ENCODE measurements at regions of chr10 and their contacts with region 1.

Region 1: GRCh38 chr10:123994417-123995081 is 98.8 kb downstream of the CHST15 start:
- DNase-seq: peak; percentile 76
- H3K4me3 ChIP-seq: no peak overlapping the region
- H3K27ac ChIP-seq: no peak overlapping the region
- H3K4me1 ChIP-seq: no peaks in the 10 kb centered on the region
- H3K27me3 ChIP-seq: peaks cover 19 to 24% of the 10 kb centered on the region in 2 experiments
- CTCF ChIP-seq: peak; percentile 92 to 96
- POLR2A ChIP-seq: no peak

Region 2: DNA sequence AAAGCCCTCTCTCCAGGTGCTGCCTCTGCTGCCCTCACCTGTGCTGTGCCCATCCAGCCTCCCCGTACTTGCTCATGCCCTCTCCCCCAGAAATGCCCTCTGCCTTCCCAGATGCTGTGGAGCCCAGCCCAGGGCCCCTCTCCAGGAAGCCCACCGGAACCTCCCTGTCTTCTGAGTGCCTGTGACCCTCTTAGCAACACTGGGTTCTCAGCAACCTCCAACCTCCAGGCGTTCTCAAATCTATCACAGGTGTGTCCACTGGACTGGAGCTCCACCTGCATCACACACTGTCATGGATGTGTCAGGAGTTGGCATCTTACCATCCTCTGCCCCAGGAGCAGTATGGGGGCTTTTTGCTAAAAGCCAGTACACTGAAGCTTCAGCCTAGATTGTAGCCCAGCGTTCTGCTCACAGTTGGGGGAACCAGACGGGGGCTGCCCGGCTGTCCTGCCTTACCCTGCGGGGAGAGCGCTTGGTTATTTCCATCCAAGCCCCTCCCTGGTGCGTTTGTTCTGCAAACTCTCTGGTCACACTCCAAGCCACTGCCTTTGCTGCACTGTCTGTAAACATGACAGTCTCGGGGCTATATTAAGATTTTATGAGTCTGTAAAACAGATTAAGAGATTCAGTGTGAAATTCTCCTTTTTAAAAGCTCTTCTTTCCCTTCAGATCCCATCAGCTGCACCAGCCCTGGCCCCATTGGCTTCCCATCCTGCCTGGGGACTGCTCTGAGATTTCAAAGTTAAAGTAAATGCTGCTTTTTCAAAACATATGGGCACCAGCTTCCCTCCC is 31.6 kb before region 1 on chr10:
- CTCF ChIA-PET with region 1: no interaction called
- POLR2A ChIA-PET with region 1: no interaction called
- dilution Hi-C with region 1: no loop called
- intact Hi-C with region 1: no loop called
- DNase-seq: no peak
- H3K4me3 ChIP-seq: no peak overlapping the region
- H3K27ac ChIP-seq: no peak overlapping the region
- H3K4me1 ChIP-seq: no peaks in the 10 kb centered on the region
- H3K27me3 ChIP-seq: no peaks in the 10 kb centered on the region
- CTCF ChIP-seq: no peak
- POLR2A ChIP-seq: no peak

Region 3: GRCh38 chr10:124025660-124026588 is 31.4 kb after region 1 on chr10:
- CTCF ChIA-PET with region 1: interaction called, 12 read pairs
- POLR2A ChIA-PET with region 1: no interaction called
- dilution Hi-C with region 1: no loop called
- intact Hi-C with region 1: no loop called
- DNase-seq: peak; percentile 31
- H3K4me3 ChIP-seq: no peak overlapping the region
- H3K27ac ChIP-seq: no peak overlapping the region
- H3K4me1 ChIP-seq: no peaks in the 10 kb centered on the region
- H3K27me3 ChIP-seq: no peaks in the 10 kb centered on the region
- CTCF ChIP-seq: peak; percentile 13 to 20
- POLR2A ChIP-seq: no peak

Region 4: DNA sequence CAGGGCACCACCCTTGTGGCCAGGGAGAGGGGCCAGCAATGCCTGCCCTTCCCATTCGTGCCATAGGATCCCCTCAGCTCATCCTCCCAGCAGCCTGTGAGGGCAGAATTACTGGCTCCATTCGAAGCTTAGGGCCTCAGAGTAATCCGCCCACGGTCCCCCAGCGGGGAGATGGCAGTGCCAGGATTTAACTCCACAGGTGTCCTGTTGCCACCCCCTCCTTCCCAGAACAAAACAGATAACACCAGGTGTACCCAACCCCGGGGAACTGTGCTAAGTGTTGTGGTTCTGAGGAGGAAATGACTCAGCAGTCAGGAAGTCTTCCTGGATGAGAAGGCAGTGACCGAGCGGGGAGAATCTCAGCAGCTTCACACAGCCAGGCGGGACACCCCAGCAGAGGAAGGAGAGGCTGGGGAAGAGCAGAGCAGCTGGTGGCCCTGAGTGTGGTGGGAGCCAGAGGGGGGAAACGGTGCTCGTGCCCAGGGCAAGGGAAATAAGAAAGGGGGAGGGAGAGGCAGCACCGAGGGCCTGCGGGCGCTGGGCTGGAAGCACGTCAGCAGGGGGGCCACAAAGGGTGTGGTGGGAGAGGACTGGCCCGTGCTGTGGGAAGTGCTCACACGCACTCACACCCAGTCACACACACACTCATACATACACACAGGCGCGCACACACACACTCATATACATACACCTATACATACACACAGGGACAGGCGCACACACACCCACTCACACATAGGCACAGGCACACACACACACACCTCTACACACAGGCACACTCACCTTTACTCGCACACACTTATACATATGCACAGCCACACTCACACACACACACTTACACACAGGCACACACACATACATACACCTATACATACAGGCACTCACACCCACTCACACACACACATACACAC is 158.6 kb after region 1 on chr10:
- CTCF ChIA-PET with region 1: interaction called, 15 read pairs
- POLR2A ChIA-PET with region 1: no interaction called
- dilution Hi-C with region 1: no loop called
- intact Hi-C with region 1: loop called (anchors 2 kb)
- DNase-seq: peak; percentile 89
- H3K4me3 ChIP-seq: no peak overlapping the region
- H3K27ac ChIP-seq: peak overlapping the region; percentile 4
- H3K4me1 ChIP-seq: peaks cover 27% of the 10 kb centered on the region
- H3K27me3 ChIP-seq: no peaks in the 10 kb centered on the region
- CTCF ChIP-seq: no peak
- POLR2A ChIP-seq: no peak

Region 5: DNA sequence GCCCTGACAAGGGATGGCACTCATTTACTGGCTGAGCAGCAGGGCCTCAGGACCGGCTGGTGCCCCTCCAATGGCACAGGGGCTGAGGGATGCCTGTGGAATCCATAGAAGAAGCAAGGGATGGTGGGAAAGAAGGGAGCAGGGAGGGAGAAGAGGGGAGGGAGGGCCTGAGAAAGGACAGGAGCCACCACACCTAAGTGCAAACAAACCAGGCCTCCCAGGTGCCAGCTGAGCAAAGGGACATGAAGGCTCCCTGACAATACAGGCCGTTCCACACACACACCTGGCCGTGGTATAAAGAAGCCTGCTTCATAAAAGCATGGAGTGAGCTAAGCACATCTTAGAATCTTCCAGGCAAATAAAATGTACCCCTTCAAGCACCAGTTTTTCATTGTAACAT is 370.1 kb after region 1 on chr10:
- CTCF ChIA-PET with region 1: interaction called, 17 read pairs
- POLR2A ChIA-PET with region 1: no interaction called
- dilution Hi-C with region 1: no loop called
- intact Hi-C with region 1: no loop called
- DNase-seq: no peak
- H3K4me3 ChIP-seq: no peak overlapping the region
- H3K27ac ChIP-seq: no peak overlapping the region
- H3K4me1 ChIP-seq: no peaks in the 10 kb centered on the region
- H3K27me3 ChIP-seq: no peaks in the 10 kb centered on the region
- CTCF ChIP-seq: no peak
- POLR2A ChIP-seq: no peak